CD8-positive, alpha-beta T cell (primary cell): ENCODE measurements at regions of chr11 and their contacts with region 1.

Region 1: DNA sequence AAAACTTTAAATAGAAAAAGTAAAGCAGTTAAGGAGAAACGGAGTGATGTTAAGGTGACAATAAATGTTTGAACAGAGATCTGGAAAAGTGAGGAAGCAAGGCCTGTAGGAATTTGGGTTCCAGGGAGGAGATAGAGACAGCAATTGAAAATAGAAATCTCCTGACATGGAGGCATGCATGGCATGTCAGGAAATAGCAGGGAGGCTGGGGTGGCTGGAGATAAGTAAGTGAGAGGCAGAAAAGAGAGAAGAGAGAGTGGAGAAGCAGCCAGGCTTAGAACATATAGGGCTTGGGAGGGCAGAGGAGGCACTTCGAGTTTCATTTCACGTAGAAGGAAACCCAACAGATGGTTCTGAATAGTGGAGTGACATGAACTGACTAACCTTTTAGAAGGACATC is 185.5 kb downstream of the LRRC4C start:
- DNase-seq: no peak
- ATAC-seq: no peak
- H3K4me3 ChIP-seq: no peak overlapping the region
- H3K4me3 Mint-ChIP-seq: no peak overlapping the region
- H3K27ac ChIP-seq: no peak overlapping the region
- H3K27ac Mint-ChIP-seq: no peak overlapping the region
- H3K4me1 ChIP-seq: no peaks in the 10 kb centered on the region
- H3K4me1 Mint-ChIP-seq: no peaks in the 10 kb centered on the region
- H3K27me3 ChIP-seq: no peaks in the 10 kb centered on the region
- H3K27me3 Mint-ChIP-seq: no peaks in the 10 kb centered on the region
- CTCF ChIP-seq: no peak

Region 2: GRCh38 chr11:41222236-41222635 is 51.7 kb before region 1 on chr11:
- CTCF ChIA-PET with region 1: no interaction called
- POLR2A ChIA-PET with region 1: no interaction called
- intact Hi-C with region 1: loop called in 1 of 2 experiments (anchors 10 kb)
- DNase-seq: no peak
- ATAC-seq: no peak
- H3K4me3 ChIP-seq: no peak overlapping the region
- H3K4me3 Mint-ChIP-seq: no peak overlapping the region
- H3K27ac ChIP-seq: no peak overlapping the region
- H3K27ac Mint-ChIP-seq: no peak overlapping the region
- H3K4me1 ChIP-seq: no peaks in the 10 kb centered on the region
- H3K4me1 Mint-ChIP-seq: no peaks in the 10 kb centered on the region
- H3K27me3 ChIP-seq: no peaks in the 10 kb centered on the region
- H3K27me3 Mint-ChIP-seq: no peaks in the 10 kb centered on the region
- CTCF ChIP-seq: no peak

Region 3: GRCh38 chr11:41245702-41246398 is 28.1 kb before region 1 on chr11:
- CTCF ChIA-PET with region 1: no interaction called
- POLR2A ChIA-PET with region 1: no interaction called
- intact Hi-C with region 1: loop called in 1 of 2 experiments (anchors 1 kb)
- DNase-seq: peak in 1 of 9 experiments; percentile 1
- ATAC-seq: no peak
- H3K4me3 ChIP-seq: no peak overlapping the region
- H3K4me3 Mint-ChIP-seq: no peak overlapping the region
- H3K27ac ChIP-seq: no peak overlapping the region
- H3K27ac Mint-ChIP-seq: no peak overlapping the region
- H3K4me1 ChIP-seq: no peaks in the 10 kb centered on the region
- H3K4me1 Mint-ChIP-seq: no peaks in the 10 kb centered on the region
- H3K27me3 ChIP-seq: no peaks in the 10 kb centered on the region
- H3K27me3 Mint-ChIP-seq: no peaks in the 10 kb centered on the region
- CTCF ChIP-seq: no peak